AG04450 (cell line): ENCODE measurements at regions of chr1 and their contacts with region 1.

Region 1: DNA sequence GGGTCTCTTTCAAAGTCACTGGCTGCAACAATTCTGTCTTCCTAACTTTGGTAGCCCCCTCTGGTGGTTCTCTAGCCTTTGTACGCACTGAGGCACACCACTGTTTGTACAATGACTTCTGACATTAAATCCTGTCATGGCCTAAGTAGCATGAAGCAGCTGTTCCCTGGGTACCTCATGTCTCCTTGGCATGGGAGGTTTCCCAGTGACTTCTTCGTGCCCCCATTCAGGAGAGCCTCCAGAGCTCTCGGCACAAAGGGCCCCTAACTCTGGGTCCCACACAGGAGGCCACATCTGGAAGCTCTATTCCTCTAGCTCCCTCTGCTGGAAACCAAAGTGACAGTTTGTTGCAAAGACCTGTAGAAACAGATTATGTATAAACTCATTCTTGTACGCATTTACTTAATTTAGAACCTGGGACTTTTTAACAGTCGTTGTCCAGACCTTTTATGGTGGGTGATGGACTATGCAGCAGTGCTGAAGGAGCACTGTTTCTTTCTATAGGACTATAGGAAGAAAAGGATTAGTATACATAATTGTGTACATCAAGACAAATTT is 13.4 kb downstream of the SWT1 start:
- DNase-seq: peak; percentile 23
- H3K4me3 ChIP-seq: no peak overlapping the region
- H3K27ac ChIP-seq: no peak overlapping the region
- H3K27me3 ChIP-seq: no peaks in the 10 kb centered on the region
- CTCF ChIP-seq: peak; percentile 77

Region 2: GRCh38 chr1:184982002-184982954 is 188.1 kb before region 1 on chr1:
- CTCF ChIA-PET with region 1: interaction called, 43 read pairs
- POLR2A ChIA-PET with region 1: no interaction called
- DNase-seq: peak; percentile 53
- H3K4me3 ChIP-seq: no peak overlapping the region
- H3K27ac ChIP-seq: no peak overlapping the region
- H3K27me3 ChIP-seq: no peaks in the 10 kb centered on the region
- CTCF ChIP-seq: peak; percentile 96

Region 3: GRCh38 chr1:184987696-184988095 is 182.7 kb before region 1 on chr1:
- CTCF ChIA-PET with region 1: interaction called, 43 read pairs
- POLR2A ChIA-PET with region 1: no interaction called
- DNase-seq: no peak
- H3K4me3 ChIP-seq: no peak overlapping the region
- H3K27ac ChIP-seq: no peak overlapping the region
- H3K27me3 ChIP-seq: no peaks in the 10 kb centered on the region
- CTCF ChIP-seq: no peak

Region 4: DNA sequence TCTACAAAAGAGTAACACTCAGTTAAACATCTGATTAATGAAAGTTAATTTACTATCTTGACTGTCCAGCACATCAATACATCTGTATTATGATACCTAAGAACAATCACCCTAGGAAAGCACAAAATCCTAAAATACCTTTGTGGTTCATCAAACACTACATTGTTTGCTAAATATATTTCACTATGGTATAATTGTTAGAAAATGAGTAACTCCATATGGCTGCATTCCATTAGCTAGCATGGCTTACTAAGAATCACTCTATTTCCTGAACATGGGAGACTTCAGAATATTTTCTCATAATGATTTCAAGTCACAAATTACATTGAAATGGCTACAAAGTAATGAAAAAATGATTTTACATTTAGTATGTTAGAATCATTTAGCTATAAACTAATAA is 26.1 kb before region 1 on chr1:
- CTCF ChIA-PET with region 1: interaction called, 11 read pairs
- POLR2A ChIA-PET with region 1: no interaction called
- DNase-seq: peak; percentile 10
- H3K4me3 ChIP-seq: no peak overlapping the region
- H3K27ac ChIP-seq: no peak overlapping the region
- H3K27me3 ChIP-seq: no peaks in the 10 kb centered on the region
- CTCF ChIP-seq: no peak

Region 5: DNA sequence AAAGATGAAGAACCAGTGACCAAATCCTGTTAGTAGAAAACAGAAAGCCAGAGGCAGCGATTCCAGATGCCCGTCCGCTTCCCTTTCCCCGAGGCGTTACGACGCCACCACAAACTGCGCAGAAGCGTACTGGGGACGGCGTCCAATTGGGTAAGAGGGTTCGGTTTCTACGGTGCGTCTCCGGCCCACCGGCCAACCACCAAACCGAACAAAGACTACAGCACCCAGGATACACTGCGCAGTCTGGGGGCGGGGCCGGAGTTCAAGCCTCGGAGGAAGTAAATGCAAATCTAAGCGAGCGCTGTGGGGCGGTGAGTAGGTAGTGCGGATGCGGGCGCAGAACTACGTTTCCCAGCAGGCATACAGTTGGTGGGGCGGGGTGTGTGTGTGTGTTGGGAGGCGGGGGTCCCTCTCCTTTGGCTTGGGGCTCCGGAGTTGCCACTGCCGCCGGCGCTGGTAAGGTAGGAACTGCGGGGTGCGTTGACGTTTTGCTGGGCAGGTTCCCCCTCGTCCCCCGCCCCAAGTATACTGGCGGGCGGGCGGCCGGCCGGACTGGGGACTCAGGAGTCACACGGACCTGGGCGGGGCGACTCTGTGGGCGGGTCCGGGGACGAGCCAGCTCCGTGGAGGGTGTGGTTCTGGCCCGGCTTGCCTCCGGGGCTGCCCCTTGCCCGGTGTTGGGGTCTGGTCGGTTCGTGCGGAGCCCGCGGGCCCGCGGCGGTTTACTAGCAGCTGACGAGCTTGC is 13.3 kb before region 1 on chr1 and contains the starts of genes SWT1 and TRMT1L:
- CTCF ChIA-PET with region 1: interaction called, 68 read pairs
- POLR2A ChIA-PET with region 1: no interaction called
- DNase-seq: peak; percentile 97
- H3K4me3 ChIP-seq: peak within 1 kb of the TSS; percentile 84
- H3K27ac ChIP-seq: peak within 1 kb of the TSS; percentile 97
- H3K27me3 ChIP-seq: no peaks in the 10 kb centered on the region
- CTCF ChIP-seq: no peak
- polyA plus RNA-seq, gene SWT1: 2.9 and 3.6 TPM in 2 replicates
- polyA plus RNA-seq, gene TRMT1L: 26.1 and 33.4 TPM in 2 replicates

Region 6: GRCh38 chr1:185200889-185201288 is 30.5 kb after region 1 on chr1:
- CTCF ChIA-PET with region 1: interaction called, 10 read pairs
- POLR2A ChIA-PET with region 1: no interaction called
- DNase-seq: no peak
- H3K4me3 ChIP-seq: no peak overlapping the region
- H3K27ac ChIP-seq: no peak overlapping the region
- H3K27me3 ChIP-seq: no peaks in the 10 kb centered on the region
- CTCF ChIP-seq: no peak

Region 7: GRCh38 chr1:185444676-185445075 is 274.3 kb after region 1 on chr1:
- CTCF ChIA-PET with region 1: no interaction called
- POLR2A ChIA-PET with region 1: no interaction called
- DNase-seq: no peak
- H3K4me3 ChIP-seq: no peak overlapping the region
- H3K27ac ChIP-seq: no peak overlapping the region
- H3K27me3 ChIP-seq: no peaks in the 10 kb centered on the region
- CTCF ChIP-seq: no peak

Region 8: DNA sequence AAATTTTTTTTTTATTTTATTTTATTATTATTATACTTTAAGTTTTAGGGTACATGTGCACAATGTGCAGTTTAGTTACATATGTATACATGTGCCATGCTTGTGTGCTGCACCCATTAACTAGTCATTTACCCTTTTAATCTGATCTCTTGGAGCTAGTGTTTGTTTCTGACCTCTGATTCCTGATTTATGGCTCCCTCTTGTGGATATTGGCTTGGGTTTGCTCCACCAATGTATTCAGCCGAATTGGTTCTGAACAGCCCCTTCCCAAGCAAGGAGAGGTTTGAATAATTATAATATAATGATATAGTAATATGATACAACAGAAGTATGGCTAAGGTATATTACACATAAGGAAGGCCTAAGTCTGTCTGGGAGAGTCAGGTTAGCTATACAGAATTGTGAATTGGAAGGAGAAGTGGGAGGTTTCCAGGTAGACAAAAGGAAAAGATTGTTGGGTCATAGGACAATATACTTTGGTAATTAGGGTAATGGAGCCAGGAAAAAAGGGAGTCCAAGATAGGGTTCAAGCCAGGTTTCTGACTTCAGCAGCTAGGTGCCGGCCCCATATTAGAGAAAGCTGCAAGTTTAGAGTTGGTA is 510.8 kb after region 1 on chr1:
- CTCF ChIA-PET with region 1: interaction called, 36 read pairs
- POLR2A ChIA-PET with region 1: no interaction called
- DNase-seq: no peak
- H3K4me3 ChIP-seq: no peak overlapping the region
- H3K27ac ChIP-seq: no peak overlapping the region
- H3K27me3 ChIP-seq: no peaks in the 10 kb centered on the region
- CTCF ChIP-seq: peak; percentile 62